ENCODE measurements at regions of chr18 and their contacts with region 1.

Region 1: DNA sequence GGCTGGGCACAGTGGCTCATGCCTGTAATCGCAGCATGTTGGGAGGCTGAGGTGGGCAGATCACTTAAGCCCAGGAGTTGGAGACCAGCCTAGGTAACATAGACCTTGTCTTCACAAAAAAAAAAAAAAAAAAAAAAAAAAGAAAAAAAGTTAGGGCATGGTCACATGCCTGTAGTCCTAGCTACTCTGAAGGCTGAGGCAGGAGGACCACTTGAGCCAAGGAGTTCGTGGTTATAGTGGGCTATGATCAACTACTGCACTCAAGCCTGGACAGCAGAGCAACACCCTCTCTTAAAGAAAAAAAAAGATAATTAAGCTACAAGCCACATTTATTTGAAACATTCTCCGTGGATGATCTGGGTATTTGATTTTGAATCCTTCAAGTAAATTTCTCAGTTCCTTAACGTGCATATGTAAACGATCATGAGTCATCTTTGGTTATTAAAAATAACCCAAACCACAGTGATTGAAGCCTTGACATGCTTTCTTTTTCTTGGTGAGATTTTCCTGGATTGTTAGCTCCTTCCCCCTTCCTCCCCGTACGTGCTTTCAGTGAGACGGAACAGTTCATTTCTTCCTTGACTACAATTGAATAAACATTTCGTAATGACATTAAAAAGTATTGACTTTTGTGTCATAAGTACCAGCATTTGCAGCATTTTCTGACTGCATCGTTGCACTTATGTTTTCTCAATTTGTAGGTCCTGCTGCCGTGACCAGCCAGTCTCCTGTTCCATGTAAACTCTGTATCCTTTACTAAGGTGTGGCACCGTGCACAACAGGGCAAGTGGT is 20.3 kb downstream of the RMC1 start:
- DNase-seq: no peak
- ATAC-seq: no peak
- H3K4me3 ChIP-seq: no peak overlapping the region
- H3K4me3 Mint-ChIP-seq: no peak overlapping the region
- H3K27ac ChIP-seq: no peak overlapping the region
- H3K27ac Mint-ChIP-seq: no peak overlapping the region
- H3K4me1 ChIP-seq: no peaks in the 10 kb centered on the region
- H3K4me1 Mint-ChIP-seq: no peaks in the 10 kb centered on the region
- H3K27me3 ChIP-seq: no peaks in the 10 kb centered on the region
- H3K27me3 Mint-ChIP-seq: no peaks in the 10 kb centered on the region
- CTCF ChIP-seq: no peak

Region 2: DNA sequence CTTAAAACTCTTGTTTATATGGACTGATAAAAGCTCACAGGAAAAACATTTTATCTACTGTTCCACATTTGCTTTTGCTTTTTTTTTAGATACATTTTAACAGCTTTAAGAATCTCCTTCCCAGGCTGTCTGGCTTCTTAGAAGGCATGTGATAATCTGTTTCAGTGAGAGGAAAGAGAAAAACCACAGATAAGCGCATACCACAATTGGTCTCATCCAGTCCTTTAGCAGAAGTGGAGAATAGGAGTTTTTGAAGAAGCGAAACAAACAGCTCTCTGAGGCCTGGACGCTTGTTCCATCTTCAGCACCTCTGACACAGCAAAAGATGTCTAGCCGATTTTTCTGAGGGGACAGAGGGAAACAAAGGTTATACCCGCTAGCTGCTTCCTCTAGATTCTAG is 17.2 kb after region 1 on chr18:
- CTCF ChIA-PET with region 1: interaction called, 4 read pairs
- POLR2A ChIA-PET with region 1: no interaction called
- intact Hi-C with region 1: loop called in 1 of 2 experiments (anchors 1 kb)
- DNase-seq: peak in 2 of 9 experiments; percentile 24 to 42
- ATAC-seq: no peak
- H3K4me3 ChIP-seq: no peak overlapping the region
- H3K4me3 Mint-ChIP-seq: peak overlapping the region; percentile 49
- H3K27ac ChIP-seq: peak overlapping the region in 1 of 2 experiments; percentile 52
- H3K27ac Mint-ChIP-seq: peak overlapping the region; percentile 75
- H3K4me1 ChIP-seq: peaks cover 14% of the 10 kb centered on the region
- H3K4me1 Mint-ChIP-seq: peaks cover 32% of the 10 kb centered on the region
- H3K27me3 ChIP-seq: no peaks in the 10 kb centered on the region
- H3K27me3 Mint-ChIP-seq: no peaks in the 10 kb centered on the region
- CTCF ChIP-seq: no peak

Region 3: DNA sequence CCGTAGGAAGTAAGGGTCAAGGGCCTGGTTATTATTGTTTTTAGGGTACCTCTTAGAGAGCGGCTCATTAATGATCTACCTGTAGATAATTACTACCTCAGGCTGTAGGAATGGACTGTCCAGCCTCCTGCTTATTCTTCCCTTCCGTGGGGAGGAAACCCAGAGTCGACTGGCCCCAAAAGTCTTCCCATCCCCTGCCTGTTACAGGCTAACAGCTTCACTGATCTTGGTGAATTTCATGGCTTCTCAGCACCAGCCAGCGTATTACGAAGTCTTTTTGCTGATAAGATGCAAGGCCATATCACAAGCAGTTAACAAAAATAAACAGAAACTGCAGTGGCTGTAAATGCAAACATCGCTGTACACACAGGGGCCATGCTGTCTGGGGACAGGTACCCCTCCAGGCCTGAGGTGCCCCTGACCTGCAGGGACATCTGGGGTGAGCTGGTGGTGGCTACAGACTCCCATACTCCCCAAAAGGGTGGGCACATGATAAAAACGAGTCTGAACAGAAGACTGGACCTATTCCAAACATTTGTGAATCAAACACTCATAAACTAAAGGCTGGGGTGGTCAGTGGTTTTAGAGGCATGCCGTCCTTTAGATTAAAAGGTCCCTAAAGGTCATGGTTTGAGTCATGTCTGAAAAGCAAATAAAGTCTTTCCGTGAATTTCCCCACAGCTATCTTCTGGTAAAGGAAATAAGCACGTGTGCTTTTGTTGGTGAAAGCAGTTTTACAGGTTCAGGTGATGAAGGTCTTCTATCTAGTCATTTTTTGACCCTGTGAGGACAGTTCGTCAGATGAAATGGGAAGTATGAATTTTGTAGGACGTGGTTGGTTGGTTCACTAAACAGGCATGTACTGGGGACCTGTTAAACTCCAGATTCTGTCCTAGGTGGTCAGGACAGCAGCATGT is 527.7 kb after region 1 on chr18:
- CTCF ChIA-PET with region 1: no interaction called
- POLR2A ChIA-PET with region 1: no interaction called
- intact Hi-C with region 1: no loop called
- DNase-seq: no peak
- ATAC-seq: no peak
- H3K4me3 ChIP-seq: no peak overlapping the region
- H3K4me3 Mint-ChIP-seq: peak overlapping the region; percentile 8
- H3K27ac ChIP-seq: no peak overlapping the region
- H3K27ac Mint-ChIP-seq: peak overlapping the region; percentile 67
- H3K4me1 ChIP-seq: peaks cover 63% of the 10 kb centered on the region
- H3K4me1 Mint-ChIP-seq: peaks cover 84% of the 10 kb centered on the region
- H3K27me3 ChIP-seq: no peaks in the 10 kb centered on the region
- H3K27me3 Mint-ChIP-seq: no peaks in the 10 kb centered on the region
- CTCF ChIP-seq: no peak

Measured in CD8-positive, alpha-beta T cell (primary cell).